ENCODE measurements at regions of chr2 and their contacts with region 1.

Region 1: GRCh38 chr2:11829947-11830707 is 83.7 kb downstream of the LPIN1 start:
- DNase-seq: peak; percentile 61
- H3K4me3 Mint-ChIP-seq: peak overlapping the region; percentile 51
- H3K27ac Mint-ChIP-seq: peak overlapping the region; percentile 56
- H3K4me1 Mint-ChIP-seq: peaks cover 31% of the 10 kb centered on the region
- H3K27me3 Mint-ChIP-seq: peaks cover 37% of the 10 kb centered on the region

Region 2: GRCh38 chr2:11743846-11744553 is 86.1 kb before region 1 on chr2:
- intact Hi-C with region 1: loop called (anchors 1 kb)
- DNase-seq: peak; percentile 69
- H3K4me3 Mint-ChIP-seq: peak overlapping the region; percentile 22
- H3K27ac Mint-ChIP-seq: peak overlapping the region; percentile 70
- H3K4me1 Mint-ChIP-seq: peaks cover 56% of the 10 kb centered on the region
- H3K27me3 Mint-ChIP-seq: no peaks in the 10 kb centered on the region

Region 3: GRCh38 chr2:11899264-11899818 is 69.2 kb after region 1 on chr2:
- intact Hi-C with region 1: no loop called
- DNase-seq: no peak
- H3K4me3 Mint-ChIP-seq: no peak overlapping the region
- H3K27ac Mint-ChIP-seq: no peak overlapping the region
- H3K4me1 Mint-ChIP-seq: no peaks in the 10 kb centered on the region
- H3K27me3 Mint-ChIP-seq: no peaks in the 10 kb centered on the region

Region 4: GRCh38 chr2:12176623-12177454 is 346.7 kb after region 1 on chr2:
- intact Hi-C with region 1: loop called (anchors 5 kb)
- DNase-seq: no peak
- H3K4me3 Mint-ChIP-seq: no peak overlapping the region
- H3K27ac Mint-ChIP-seq: no peak overlapping the region
- H3K4me1 Mint-ChIP-seq: peaks cover 24% of the 10 kb centered on the region
- H3K27me3 Mint-ChIP-seq: peaks cover 14% of the 10 kb centered on the region

Region 5: DNA sequence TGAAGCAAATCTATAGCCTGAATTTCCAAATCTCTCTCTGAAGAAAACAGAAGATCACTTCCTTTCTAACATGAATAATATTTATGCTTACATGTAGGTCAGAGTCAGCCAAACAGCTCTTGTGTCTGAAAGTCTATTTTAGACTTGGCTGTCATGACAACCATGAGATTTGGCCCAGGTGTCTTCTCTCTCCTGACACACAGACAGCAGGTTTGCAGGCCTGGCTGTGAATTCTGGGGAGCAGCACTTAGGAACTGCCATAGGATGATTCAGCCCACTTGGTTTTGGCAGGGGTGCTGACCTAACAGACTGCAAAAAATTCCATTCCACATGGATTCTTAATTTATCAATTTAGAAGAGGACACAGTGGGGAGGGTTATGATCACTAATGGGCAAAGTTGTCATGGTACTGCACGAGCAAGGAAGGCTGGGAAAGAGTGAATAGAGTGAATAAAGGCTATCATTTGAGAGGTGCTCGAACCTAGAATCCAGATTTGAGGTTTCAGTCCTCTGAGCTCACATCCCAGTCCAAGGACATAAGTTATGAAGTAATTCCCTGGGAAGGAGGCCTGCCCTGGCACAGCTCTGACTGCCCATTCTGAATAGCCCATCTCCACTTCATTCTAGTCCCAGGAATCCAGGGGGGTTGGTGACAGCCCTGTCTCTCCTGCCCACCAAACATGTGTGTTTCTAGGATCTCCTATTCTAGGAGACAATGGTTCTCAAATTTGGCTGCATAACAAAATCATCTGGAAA is 432.7 kb after region 1 on chr2:
- intact Hi-C with region 1: no loop called
- DNase-seq: no peak
- H3K4me3 Mint-ChIP-seq: no peak overlapping the region
- H3K27ac Mint-ChIP-seq: no peak overlapping the region
- H3K4me1 Mint-ChIP-seq: peaks cover 11% of the 10 kb centered on the region
- H3K27me3 Mint-ChIP-seq: peaks cover 16% of the 10 kb centered on the region

Region 6: DNA sequence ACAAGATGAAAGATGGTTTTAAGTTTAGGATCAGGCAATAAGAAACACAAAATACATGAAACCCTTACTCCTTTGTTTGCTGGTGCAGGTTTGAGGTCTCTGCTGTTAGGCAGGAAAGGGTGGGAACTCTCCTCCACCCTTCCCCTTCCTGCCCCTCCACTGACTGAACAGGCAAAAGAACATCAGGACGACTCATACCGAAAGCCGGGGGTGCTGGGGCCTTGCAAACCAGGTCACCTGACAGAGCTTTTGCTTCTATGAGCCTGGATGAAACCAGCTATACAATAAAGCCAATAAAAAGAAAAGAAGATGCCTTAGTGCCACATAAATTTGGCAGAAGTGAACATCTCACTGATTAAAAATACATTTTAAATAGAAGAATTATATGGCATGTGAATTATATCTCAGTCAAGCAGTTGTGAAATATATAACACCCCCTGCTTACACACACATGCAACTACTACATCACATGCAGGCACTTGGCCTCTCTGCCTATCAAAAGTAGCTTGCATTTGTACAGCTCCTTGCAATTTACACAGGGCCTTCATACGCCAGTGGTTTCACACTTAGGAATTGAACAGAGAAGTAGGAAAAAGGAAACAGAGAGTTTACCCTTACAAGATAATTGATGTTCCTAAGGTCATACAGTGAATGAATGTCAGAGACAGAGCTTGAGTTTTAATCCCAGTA is 671.5 kb after region 1 on chr2:
- intact Hi-C with region 1: loop called (anchors 1 kb)
- DNase-seq: peak; percentile 82
- H3K4me3 Mint-ChIP-seq: peak overlapping the region; percentile 34
- H3K27ac Mint-ChIP-seq: peak overlapping the region; percentile 76
- H3K4me1 Mint-ChIP-seq: peaks cover 87% of the 10 kb centered on the region
- H3K27me3 Mint-ChIP-seq: no peaks in the 10 kb centered on the region

Region 7: DNA sequence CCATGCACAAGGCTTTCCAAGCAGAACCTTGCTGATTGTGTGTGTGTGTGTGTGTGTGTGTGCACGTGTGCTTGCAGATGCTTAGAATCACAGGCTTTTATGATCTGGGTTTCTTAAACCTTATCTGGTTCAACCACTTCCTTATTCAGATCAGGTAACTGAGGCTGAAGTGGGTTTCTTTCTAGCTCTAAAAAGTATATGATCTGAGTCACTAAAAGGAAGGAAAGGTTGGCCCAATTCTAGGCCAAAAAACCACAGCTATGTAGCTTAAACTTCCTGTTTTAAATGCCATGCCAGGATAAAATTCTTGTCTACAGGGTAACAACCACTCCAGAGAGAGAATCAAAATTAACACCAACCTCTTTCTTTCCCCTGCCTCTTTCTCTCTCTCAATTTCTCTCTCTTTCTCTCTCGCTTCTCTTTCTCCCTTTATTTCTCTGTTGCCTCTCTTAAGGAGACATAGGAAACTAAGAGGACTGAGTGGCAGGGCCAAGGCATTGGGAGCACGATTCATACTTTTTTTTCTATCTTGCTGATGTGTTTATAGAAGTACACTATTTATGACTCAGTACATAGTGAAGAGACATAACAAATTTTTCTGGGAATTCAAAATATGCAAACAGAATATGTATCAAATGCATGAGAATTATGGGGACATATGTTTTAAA is 1026.9 kb after region 1 on chr2:
- intact Hi-C with region 1: loop called (anchors 1 kb)
- DNase-seq: peak; percentile 28
- H3K4me3 Mint-ChIP-seq: no peak overlapping the region
- H3K27ac Mint-ChIP-seq: no peak overlapping the region
- H3K4me1 Mint-ChIP-seq: peaks cover 20% of the 10 kb centered on the region
- H3K27me3 Mint-ChIP-seq: peaks cover 3% of the 10 kb centered on the region

Region 8: GRCh38 chr2:12965540-12966269 is 1135.6 kb after region 1 on chr2:
- intact Hi-C with region 1: loop called (anchors 1 kb)
- DNase-seq: no peak
- H3K4me3 Mint-ChIP-seq: peak overlapping the region; percentile 2
- H3K27ac Mint-ChIP-seq: peak overlapping the region; percentile 48
- H3K4me1 Mint-ChIP-seq: peaks cover 49% of the 10 kb centered on the region
- H3K27me3 Mint-ChIP-seq: peaks cover 11% of the 10 kb centered on the region